Right ventricle myocardium inferior (tissue), 1 donor: ENCODE measurements at regions of chr4 and their contacts with region 1.

Region 1: GRCh38 chr4:139554893-139555704 is 920 bp downstream of the SETD7 start:
- DNase-seq: peak; percentile 93
- ATAC-seq: peak; percentile 79

Region 2: DNA sequence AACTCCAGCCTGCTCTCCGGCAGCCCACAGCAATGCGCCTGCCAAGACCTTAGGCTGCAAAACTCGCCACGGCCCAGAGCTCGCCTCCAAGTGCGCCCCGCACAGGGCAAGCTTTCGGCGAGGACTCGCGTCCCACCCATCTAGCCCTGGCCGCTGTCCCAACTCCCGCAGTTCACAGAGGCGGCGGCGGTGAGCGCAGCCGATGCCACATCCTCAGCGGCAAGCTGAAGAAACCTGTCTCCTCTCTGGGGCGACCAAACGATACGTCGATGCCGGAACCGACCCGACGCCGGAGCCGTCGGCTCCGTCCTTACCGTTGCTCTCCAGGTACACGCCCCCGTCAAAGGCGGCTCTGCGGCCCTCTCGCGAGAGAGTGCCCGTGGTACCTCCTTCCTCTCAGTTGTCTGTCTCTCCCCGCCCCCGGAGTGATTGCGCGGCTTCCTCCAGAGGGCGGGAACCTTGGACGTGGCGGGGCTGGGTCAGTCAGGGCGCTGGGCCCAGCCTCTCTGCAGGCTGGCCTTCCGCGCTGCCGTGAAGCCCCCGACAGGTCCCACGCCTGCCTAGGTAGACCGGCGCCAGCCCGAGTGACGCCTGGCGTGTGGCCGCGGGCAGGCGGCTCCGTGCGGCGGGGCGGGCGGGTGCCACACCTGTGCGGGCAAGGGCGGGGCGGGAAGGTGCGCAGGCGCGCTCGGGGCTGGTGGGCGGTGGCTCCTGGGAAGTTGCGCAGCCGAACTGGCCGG is 101.6 kb before region 1 on chr4:
- intact Hi-C with region 1: loop called (anchors 5 kb)
- DNase-seq: peak; percentile 99
- ATAC-seq: peak; percentile 98

Region 3: DNA sequence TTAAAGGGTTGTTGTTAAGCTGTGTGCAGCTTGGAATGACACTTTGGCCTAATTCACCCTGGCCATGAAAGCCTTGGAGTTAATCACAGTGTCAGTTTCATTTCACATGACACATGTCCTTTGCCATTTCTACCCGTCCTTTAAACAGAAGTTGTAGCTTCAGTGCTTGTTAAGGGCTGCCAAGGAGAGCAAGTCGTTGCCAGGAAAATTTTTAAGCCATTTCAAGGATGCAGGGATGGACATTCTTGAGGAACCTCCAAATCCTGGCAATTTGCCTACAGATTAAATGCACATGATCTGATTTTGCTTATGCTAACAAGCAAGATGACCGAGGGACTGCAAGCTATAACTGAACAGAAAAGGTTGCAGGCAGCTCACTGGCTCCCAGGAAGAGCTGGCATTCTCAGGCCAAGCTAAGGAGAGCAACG is 39.6 kb before region 1 on chr4:
- intact Hi-C with region 1: loop called (anchors 5 kb)
- DNase-seq: no peak
- ATAC-seq: peak; percentile 71

Region 4: GRCh38 chr4:139768896-139769295 is 213.8 kb after region 1 on chr4:
- intact Hi-C with region 1: no loop called
- DNase-seq: no peak
- ATAC-seq: no peak